Spleen (tissue), 13 donors: ENCODE measurements at regions of chrX and their contacts with region 1.

Region 1: DNA sequence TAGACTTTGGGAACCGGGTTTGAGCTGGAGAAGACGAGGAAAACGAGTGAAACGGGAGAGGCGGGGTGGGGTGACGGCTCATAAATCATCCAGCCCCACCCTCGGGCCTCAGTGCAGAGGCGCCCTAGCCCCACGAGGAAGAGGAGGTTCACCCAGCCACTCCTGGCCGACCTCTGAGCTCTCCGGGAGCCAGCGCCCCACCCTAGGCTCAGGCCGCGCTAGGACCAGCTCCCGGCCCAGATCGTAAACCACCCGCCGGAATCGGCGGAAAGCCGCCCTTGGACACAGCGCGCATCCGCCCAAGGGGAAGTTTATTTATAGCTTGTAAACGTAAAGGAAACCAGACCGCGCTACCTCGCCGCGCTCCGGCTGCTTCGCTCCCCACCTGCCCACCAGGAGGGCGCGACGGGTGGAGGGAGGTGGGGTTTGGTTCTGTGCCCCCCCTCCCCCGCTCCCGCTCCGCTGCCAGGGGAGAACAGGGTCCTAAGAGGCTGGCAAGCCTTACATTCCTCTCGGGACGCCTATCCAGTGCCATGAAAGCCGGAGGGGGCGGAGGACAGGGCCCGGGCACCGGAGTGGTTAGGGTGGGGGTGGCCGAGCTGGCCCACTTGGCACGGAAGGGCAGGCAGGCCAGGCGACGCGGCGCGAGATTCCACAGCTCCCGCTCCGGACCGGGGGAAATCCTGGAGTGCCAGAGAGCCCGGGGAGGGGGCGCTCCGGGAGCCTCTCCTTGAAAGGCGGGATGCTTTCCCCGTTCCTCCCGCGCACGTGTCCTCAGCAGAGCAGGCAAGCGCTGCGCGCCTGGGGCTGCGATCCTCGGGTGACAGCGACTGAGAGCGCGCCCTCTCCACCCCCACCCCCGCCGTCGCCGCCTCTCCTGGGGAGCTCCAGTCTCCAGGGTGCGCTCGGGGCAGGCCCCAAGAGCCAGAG is 84.2 kb downstream of the BCOR start:
- DNase-seq: peak; percentile 90
- H3K4me3 ChIP-seq: peak overlapping the region; percentile 20 to 79 (median 51)
- H3K27ac ChIP-seq: peak overlapping the region; percentile 14 to 89 (median 84)
- H3K4me1 ChIP-seq: peaks cover 0 to 59% (median 42%) of the 10 kb centered on the region in 6 donors
- H3K27me3 ChIP-seq: peaks cover 0 to 66% (median 33%) of the 10 kb centered on the region in 7 donors
- CTCF ChIP-seq: no peak
- POLR2A ChIP-seq: no peak

Region 2: GRCh38 chrX:40097497-40098263 is 84.1 kb after region 1 on chrX and contains the start of gene BCOR:
- intact Hi-C with region 1: loop called (anchors 10 kb)
- DNase-seq: peak; percentile 93
- H3K4me3 ChIP-seq: peak within 1 kb of the TSS; percentile 62 to 88 (median 72)
- H3K27ac ChIP-seq: peak within 1 kb of the TSS; percentile 81 to 94 (median 92)
- H3K4me1 ChIP-seq: peaks cover 7 to 61% (median 37%) of the 10 kb centered on the region in 6 donors
- H3K27me3 ChIP-seq: peaks cover 0 to 90% (median 32%) of the 10 kb centered on the region in 7 donors
- CTCF ChIP-seq: no peak
- POLR2A ChIP-seq: peak in 2 of 3 donors; percentile 34 to 68
- total RNA-seq, gene BCOR: 26.1 to 38.6 (median 31.8) TPM

Region 3: GRCh38 chrX:40153335-40154249 is 140.1 kb after region 1 on chrX:
- intact Hi-C with region 1: loop called (anchors 10 kb)
- DNase-seq: peak; percentile 88
- H3K4me3 ChIP-seq: peak overlapping the region; percentile 0 to 71 (median 42)
- H3K27ac ChIP-seq: peak overlapping the region in 7 of 8 donors; percentile 13 to 78 (median 71)
- H3K4me1 ChIP-seq: peaks cover 0 to 94% (median 59%) of the 10 kb centered on the region in 6 donors
- H3K27me3 ChIP-seq: peaks cover 0 to 97% (median 34%) of the 10 kb centered on the region in 7 donors
- CTCF ChIP-seq: peak in 1 of 11 experiments; percentile 14
- POLR2A ChIP-seq: no peak